Caco-2 (cell line): ENCODE measurements at regions of chr6 and their contacts with region 1.

Region 1: GRCh38 chr6:121849477-121849876 is 414.0 kb downstream of the GJA1 start:
- DNase-seq: peak; percentile 69 to 83
- H3K4me3 ChIP-seq: no peak overlapping the region
- H3K4me3 Mint-ChIP-seq: no peak overlapping the region
- H3K27ac Mint-ChIP-seq: no peak overlapping the region
- H3K4me1 ChIP-seq: peaks cover 37% of the 10 kb centered on the region
- H3K4me1 Mint-ChIP-seq: peaks cover 37% of the 10 kb centered on the region
- H3K27me3 ChIP-seq: no peaks in the 10 kb centered on the region
- H3K27me3 Mint-ChIP-seq: no peaks in the 10 kb centered on the region
- CTCF ChIP-seq: peak; percentile 68 to 81

Region 2: DNA sequence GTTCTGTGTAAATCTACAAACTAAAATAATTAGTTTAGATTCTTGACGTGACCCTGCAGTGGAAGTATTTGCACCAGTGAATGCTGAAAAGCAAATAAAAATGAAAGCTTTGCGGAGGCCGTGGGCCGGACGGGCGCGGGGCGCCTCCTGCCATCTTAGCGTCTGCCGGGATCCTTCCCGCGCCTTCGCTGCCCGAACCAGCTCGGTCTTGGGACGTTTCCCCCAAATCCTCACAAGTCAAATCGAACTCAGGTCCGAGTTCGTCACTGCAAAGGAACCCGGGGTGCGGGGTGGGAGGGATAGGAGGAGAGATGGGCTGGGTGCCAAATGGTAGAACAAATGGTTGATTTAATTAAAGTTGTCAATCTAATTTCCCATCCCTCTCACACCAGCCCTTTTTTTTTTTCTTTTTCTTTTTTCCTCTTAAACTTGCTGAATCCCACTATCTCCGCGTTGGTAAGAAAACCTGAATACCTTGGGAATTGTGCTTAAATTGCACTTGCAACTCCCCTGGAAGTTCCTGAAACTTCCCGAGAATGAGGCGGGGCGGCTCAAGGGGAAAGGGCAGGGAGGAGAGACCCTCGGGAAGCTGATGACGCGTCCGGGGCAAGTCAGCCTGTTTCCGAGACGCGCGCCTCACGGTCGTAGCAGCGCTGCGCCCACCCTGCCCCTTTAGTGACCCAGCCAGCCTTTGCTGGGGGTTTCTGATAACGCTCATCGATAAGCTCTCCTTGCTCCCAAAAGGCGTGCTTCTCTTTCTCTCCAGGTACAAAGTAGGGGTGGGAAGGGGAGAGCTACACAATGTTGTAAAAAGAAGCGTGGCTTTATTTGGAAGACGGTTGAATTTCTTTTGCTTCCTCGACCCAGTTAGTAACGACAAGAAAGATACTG is 412.3 kb before region 1 on chr6:
- CTCF ChIA-PET with region 1: interaction called, 10 read pairs
- POLR2A ChIA-PET with region 1: no interaction called
- intact Hi-C with region 1: loop called (anchors 1 kb)
- DNase-seq: peak; percentile 39 to 46
- H3K4me3 ChIP-seq: peak overlapping the region; percentile 56
- H3K4me3 Mint-ChIP-seq: peak overlapping the region; percentile 93
- H3K27ac Mint-ChIP-seq: peak overlapping the region; percentile 92
- H3K4me1 ChIP-seq: 0 out of 2 replicates have a peak, but pooled peaks cover 4% of the 10 kb centered on the region
- H3K4me1 Mint-ChIP-seq: peaks cover 12% of the 10 kb centered on the region
- H3K27me3 ChIP-seq: no peaks in the 10 kb centered on the region
- H3K27me3 Mint-ChIP-seq: no peaks in the 10 kb centered on the region
- CTCF ChIP-seq: no peak

Region 3: GRCh38 chr6:121510559-121511177 is 338.8 kb before region 1 on chr6:
- CTCF ChIA-PET with region 1: no interaction called
- POLR2A ChIA-PET with region 1: no interaction called
- intact Hi-C with region 1: loop called (anchors 10 kb)
- DNase-seq: peak in 1 of 2 experiments; percentile 2
- H3K4me3 ChIP-seq: no peak overlapping the region
- H3K4me3 Mint-ChIP-seq: no peak overlapping the region
- H3K27ac Mint-ChIP-seq: peak overlapping the region; percentile 15
- H3K4me1 ChIP-seq: 0 out of 2 replicates have a peak, but pooled peaks cover 5% of the 10 kb centered on the region
- H3K4me1 Mint-ChIP-seq: peaks cover 7% of the 10 kb centered on the region
- H3K27me3 ChIP-seq: no peaks in the 10 kb centered on the region
- H3K27me3 Mint-ChIP-seq: no peaks in the 10 kb centered on the region
- CTCF ChIP-seq: no peak

Region 4: DNA sequence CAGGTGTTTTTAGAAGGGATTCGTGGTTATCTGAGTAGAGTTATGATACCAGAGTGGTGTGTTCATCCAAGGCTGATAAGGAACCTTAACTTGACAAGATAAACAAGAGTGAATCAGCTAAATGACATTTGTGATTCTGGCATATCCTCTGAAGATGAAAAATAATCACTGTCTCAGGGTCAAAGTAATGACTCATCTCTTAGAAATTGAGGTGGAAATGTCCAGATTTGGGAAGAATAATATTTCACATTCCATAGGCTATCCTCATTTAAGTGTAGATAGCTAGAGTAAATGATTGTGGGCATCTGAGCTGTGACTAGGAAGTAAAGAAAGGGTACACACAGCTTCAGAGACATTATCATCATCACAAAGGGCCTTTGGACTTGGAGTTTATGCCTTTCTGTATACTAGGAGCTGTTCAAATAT is 158.3 kb before region 1 on chr6:
- CTCF ChIA-PET with region 1: no interaction called
- POLR2A ChIA-PET with region 1: no interaction called
- intact Hi-C with region 1: loop called (anchors 1 kb)
- DNase-seq: peak in 1 of 2 experiments; percentile 35
- H3K4me3 ChIP-seq: no peak overlapping the region
- H3K4me3 Mint-ChIP-seq: peak overlapping the region; percentile 30
- H3K27ac Mint-ChIP-seq: peak overlapping the region; percentile 79
- H3K4me1 ChIP-seq: peaks cover 41% of the 10 kb centered on the region
- H3K4me1 Mint-ChIP-seq: peaks cover 38% of the 10 kb centered on the region
- H3K27me3 ChIP-seq: no peaks in the 10 kb centered on the region
- H3K27me3 Mint-ChIP-seq: no peaks in the 10 kb centered on the region
- CTCF ChIP-seq: no peak

Region 5: DNA sequence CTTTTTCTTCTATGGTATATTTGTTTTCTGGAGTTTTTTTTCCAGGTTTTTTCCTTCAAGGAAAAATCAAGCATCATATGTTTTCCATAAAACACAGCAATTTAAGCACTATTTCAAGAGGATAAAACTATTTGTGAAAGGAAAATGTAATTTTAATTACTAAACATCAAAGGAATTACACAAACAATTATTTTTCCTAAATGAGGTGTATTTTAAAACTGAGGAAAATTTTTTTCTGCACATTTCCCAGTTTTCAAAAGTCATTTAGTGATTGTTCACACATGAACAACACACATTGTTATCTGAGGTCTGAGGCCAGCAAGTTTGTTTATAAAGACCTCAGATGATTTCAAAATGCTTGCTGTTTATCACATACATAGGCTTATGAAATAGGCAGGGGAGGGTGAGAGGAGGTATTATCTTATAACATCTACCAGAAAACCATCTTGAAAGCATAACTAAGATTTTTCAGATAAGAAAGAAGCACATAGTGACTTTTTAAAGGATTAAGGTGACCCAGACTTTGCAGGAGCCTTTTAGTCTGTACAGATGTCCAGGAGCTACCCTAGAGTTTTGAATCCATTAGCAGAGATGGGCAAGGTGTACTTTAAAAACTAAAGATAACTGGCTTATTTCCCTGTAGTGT is 32.4 kb before region 1 on chr6:
- CTCF ChIA-PET with region 1: no interaction called
- POLR2A ChIA-PET with region 1: no interaction called
- intact Hi-C with region 1: loop called (anchors 1 kb)
- DNase-seq: peak; percentile 35 to 54
- H3K4me3 ChIP-seq: no peak overlapping the region
- H3K4me3 Mint-ChIP-seq: no peak overlapping the region
- H3K27ac Mint-ChIP-seq: no peak overlapping the region
- H3K4me1 ChIP-seq: peaks cover 34% of the 10 kb centered on the region
- H3K4me1 Mint-ChIP-seq: peaks cover 9% of the 10 kb centered on the region
- H3K27me3 ChIP-seq: no peaks in the 10 kb centered on the region
- H3K27me3 Mint-ChIP-seq: no peaks in the 10 kb centered on the region
- CTCF ChIP-seq: no peak

Region 6: DNA sequence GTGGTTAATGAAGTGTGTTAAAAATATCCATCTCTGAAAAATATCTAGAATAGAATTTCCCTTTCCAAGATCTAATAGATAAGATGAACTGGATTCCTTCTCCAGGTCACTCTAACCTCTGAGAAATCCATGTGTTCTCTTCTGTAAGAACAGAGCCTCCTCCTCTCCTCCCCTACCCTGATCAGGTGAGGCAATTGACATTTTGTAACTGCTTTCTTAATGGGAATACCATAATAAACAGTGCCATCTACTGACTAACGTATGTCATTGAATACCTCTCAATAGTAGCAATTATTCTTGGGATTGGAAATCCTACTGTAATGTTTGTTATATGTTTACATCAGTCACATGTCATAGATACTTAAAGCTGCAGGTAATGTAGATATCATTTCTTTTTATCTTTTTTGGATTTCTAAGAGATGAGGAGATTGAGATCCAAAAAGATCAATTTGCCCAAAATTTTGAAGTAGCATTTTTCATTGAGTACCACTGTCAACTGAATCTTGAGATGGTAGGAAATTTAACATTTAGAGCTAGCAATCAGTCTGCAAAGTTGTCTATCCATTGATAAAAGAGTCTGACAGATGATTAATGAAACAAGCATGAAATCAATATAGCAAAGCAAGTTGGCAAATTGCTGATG is 184.2 kb after region 1 on chr6:
- CTCF ChIA-PET with region 1: no interaction called
- POLR2A ChIA-PET with region 1: no interaction called
- intact Hi-C with region 1: loop called (anchors 1 kb)
- DNase-seq: peak in 1 of 2 experiments; percentile 51
- H3K4me3 ChIP-seq: no peak overlapping the region
- H3K4me3 Mint-ChIP-seq: no peak overlapping the region
- H3K27ac Mint-ChIP-seq: no peak overlapping the region
- H3K4me1 ChIP-seq: peaks cover 13% of the 10 kb centered on the region
- H3K4me1 Mint-ChIP-seq: peaks cover 24% of the 10 kb centered on the region
- H3K27me3 ChIP-seq: no peaks in the 10 kb centered on the region
- H3K27me3 Mint-ChIP-seq: no peaks in the 10 kb centered on the region
- CTCF ChIP-seq: peak in 1 of 2 experiments; percentile 32